ENCODE measurements at regions of chr21 and their contacts with region 1.

Region 1: GRCh38 chr21:16942703-16943102 is 570.1 kb upstream of the CXADR start:
- H3K4me3 ChIP-seq: no peak overlapping the region
- H3K27ac ChIP-seq: no peak overlapping the region
- H3K4me1 ChIP-seq: no peaks in the 10 kb centered on the region
- CTCF ChIP-seq: no peak

Region 2: DNA sequence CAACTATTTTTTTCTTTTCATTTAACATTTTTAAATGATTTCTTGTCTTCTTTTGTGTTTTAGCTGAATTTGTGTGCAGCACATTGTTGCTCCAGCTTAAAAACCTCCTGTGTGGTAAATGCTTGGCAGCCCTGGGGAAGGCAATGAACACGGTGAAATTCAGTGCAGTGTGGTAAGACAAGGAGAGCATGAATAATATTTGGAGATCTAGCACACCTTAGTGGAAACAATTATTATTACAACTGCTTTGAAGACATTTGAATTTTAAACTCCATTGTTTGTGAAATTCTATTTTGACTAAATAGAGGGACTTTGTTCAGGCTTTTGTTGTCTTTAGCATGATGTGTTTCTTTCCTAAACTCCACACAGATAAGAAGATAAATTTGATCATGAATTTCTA is 327.5 kb after region 1 on chr21:
- CTCF ChIA-PET with region 1: interaction called, 12 read pairs
- POLR2A ChIA-PET with region 1: no interaction called
- H3K4me3 ChIP-seq: no peak overlapping the region
- H3K27ac ChIP-seq: no peak overlapping the region
- H3K4me1 ChIP-seq: peaks cover 13% of the 10 kb centered on the region
- CTCF ChIP-seq: no peak